Stomach (tissue), 19 donors: ENCODE measurements at regions of chr6 and their contacts with region 1.

Region 1: GRCh38 chr6:36765594-36766398 is 68.2 kb downstream of the RAB44 start:
- DNase-seq: peak; percentile 87 to 93
- H3K4me3 ChIP-seq: no peak overlapping the region
- H3K27ac ChIP-seq: no peak overlapping the region
- H3K4me1 ChIP-seq: peaks cover 7 to 39% (median 15%) of the 10 kb centered on the region in 4 donors
- H3K27me3 ChIP-seq: no peaks in the 10 kb centered on the region
- CTCF ChIP-seq: peak in 6 of 7 experiments; percentile 16 to 84 (median 78)
- EP300 ChIP-seq: no peak
- POLR2A ChIP-seq: no peak

Region 2: GRCh38 chr6:36848658-36849441 is 83.1 kb after region 1 on chr6:
- intact Hi-C with region 1: loop called (anchors 5 kb)
- DNase-seq: peak; percentile 80 to 87
- H3K4me3 ChIP-seq: peak overlapping the region; percentile 12 to 32 (median 18)
- H3K27ac ChIP-seq: peak overlapping the region in 2 of 5 donors; percentile 12 to 55
- H3K4me1 ChIP-seq: peaks cover 0 to 47% (median 21%) of the 10 kb centered on the region in 4 donors
- H3K27me3 ChIP-seq: no peaks in the 10 kb centered on the region
- CTCF ChIP-seq: no peak
- EP300 ChIP-seq: no peak
- POLR2A ChIP-seq: no peak

Region 3: DNA sequence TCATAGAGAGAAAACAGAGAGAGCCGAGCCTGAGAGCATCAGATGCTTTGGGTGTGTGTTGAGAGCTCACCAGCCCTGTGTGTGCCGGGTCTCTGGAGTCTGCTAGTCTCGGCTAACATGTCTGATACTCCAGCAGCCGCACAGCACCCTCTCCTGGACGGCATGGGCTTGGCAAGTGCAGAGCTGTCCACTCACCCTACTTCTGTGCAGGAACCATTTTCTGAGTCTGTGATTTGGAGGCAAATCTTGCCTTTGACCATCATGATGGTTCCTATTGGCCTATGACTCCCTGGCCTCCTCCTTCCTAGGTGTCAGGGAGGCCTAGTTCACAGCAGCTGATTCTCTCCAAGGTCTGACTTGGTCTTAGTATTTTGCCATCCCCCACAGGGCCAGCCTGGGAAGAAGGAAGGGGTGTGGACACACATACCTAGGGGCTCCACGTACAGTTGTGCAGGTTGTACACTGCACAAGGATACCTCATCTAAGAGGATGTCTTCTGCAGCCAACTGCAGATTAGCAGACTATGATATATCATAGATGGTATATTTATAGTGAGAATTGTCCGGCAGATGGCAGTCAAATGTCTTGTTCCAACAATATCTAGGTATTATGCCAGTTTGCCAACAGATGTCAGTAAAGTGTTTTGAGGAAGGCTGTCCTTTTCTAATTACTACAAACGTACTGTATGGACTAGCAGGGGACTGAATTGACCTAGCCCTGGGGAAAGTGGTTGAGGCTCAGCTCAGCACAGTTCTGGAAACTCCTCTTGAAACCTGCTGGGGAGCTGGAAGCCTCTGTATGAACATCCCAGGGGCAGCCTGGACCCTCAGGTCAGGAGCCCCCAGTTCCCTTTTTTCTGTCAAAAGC is 252.6 kb after region 1 on chr6:
- intact Hi-C with region 1: loop called (anchors 10 kb)
- DNase-seq: peak; percentile 94 to 96
- H3K4me3 ChIP-seq: no peak overlapping the region
- H3K27ac ChIP-seq: peak overlapping the region in 4 of 5 donors; percentile 23 to 69 (median 34)
- H3K4me1 ChIP-seq: peaks cover 7 to 44% (median 18%) of the 10 kb centered on the region in 4 donors
- H3K27me3 ChIP-seq: no peaks in the 10 kb centered on the region
- CTCF ChIP-seq: peak in 5 of 7 experiments; percentile 73 to 91 (median 89)
- EP300 ChIP-seq: no peak
- POLR2A ChIP-seq: no peak